ENCODE measurements at regions of chr17 and their contacts with region 1.

Region 1: DNA sequence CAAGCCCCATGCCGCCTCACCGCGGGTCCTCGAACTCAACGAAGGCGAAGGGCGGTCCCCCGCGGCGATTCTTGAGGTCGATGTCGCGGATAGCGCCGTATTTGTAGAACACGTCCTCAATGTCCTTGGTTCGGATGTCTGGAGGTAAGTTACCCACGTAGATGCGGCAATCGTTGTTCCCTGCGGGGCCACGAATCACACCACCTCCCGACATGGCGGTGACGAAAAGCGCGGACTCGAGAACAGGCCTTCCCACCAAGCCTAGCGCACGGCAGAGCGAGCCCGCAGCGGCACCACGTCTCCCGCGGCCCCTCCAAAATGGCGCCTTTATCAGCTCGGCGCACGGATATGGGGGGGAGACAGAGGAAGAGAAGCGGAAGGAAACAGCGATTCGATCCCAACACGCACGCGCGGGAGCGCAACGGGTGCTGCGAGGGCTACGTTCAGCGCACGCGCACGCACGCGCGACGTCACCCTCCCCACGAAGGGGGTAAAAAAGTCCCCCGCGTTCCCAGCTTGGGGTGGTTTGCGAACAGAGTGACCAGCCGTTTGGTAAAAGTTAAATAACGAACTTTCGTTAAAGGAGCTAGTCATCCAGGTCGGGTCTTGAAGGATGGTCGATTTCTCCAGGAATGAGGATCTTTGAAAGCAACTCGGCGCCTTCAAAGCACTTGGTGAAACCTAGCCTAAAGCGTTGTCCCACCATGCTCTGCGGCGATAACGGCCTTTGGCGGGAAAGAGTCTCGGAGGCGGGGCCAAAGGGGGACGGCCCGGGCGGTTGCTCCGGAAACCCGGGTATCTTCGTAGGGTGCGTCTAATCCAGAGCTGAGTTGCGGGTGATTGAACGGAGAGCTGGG is at the start of gene SRSF1:
- DNase-seq: peak; percentile 95 to 99 (median 97)
- ATAC-seq: peak; percentile 88
- H3K4me3 Mint-ChIP-seq: peak within 1 kb of the TSS; percentile 98 to 100 (median 99)
- H3K27ac Mint-ChIP-seq: peak within 1 kb of the TSS; percentile 98 to 100 (median 99)
- H3K4me1 Mint-ChIP-seq: peaks cover 20 to 58% (median 54%) of the 10 kb centered on the region in 4 donors
- H3K27me3 Mint-ChIP-seq: peaks cover 0 to 4% (median 0%) of the 10 kb centered on the region in 5 donors
- polyA plus RNA-seq, gene SRSF1: 43.5 to 51.6 (median 45.4) TPM

Region 2: DNA sequence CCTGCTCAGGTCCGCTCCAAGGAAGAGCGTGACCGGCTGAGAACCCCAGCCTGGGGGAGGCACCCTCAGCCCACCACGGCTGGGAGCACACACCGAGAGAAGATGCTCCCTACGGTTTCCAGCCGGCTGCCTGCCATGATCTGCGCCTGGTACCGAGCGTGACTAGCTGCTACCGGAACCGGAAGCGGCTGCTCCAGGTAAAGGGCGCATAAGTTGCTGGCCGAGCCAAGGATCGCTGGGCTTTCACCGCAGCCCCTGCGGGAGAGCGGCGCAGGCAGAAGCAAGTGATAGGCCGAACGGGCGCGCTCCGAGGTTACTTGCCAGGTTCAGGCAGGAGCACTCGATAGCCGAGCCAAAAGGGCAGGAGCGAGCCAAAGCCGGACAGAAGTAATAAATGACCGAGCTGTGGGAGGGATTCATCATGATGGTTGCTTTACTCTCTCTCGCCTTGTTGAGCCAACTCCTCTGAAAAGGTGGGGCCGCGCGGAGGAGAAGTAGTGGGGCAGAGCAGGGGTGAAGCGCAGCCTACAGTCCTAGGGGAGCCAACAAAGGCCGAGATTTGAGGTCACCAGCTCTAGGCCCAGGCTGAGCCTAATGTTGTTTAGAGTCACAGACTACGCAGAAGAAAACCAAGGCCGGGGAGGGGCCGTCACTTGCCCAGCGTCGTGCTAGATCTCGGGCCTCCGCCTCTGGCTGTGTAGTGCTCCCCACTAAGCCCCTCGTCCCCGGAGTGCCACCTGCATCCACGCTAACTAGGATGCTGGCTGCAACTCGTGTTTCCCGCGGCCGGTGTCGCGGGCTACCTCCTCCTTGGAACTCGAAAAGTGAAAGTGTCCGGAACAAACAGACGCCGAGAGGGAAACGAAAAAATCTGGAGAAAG is 157.0 kb before region 1 on chr17 and contains the start of gene MRPS23:
- POLR2A ChIA-PET with region 1: interaction called, 45 read pairs
- DNase-seq: peak; percentile 87 to 98 (median 95)
- ATAC-seq: peak; percentile 91 to 93
- H3K4me3 Mint-ChIP-seq: peak within 1 kb of the TSS; percentile 96 to 100 (median 98)
- H3K27ac Mint-ChIP-seq: peak within 1 kb of the TSS; percentile 99 to 100 (median 100)
- H3K4me1 Mint-ChIP-seq: peaks cover 21 to 55% (median 46%) of the 10 kb centered on the region in 4 donors
- H3K27me3 Mint-ChIP-seq: no peaks in the 10 kb centered on the region
- polyA plus RNA-seq, gene MRPS23: 41.1 to 42.8 (median 41.6) TPM

Region 3: GRCh38 chr17:57939797-57940196 is 67.4 kb before region 1 on chr17:
- POLR2A ChIA-PET with region 1: no interaction called
- DNase-seq: peak in 1 of 10 donors; percentile 42
- ATAC-seq: peak; percentile 62 to 70
- H3K4me3 Mint-ChIP-seq: peak overlapping the region in 1 of 10 donors; percentile 20
- H3K27ac Mint-ChIP-seq: no peak overlapping the region
- H3K4me1 Mint-ChIP-seq: peaks cover 4 to 30% (median 10%) of the 10 kb centered on the region in 4 donors
- H3K27me3 Mint-ChIP-seq: peaks cover 4 to 18% (median 17%) of the 10 kb centered on the region in 5 donors

Region 4: DNA sequence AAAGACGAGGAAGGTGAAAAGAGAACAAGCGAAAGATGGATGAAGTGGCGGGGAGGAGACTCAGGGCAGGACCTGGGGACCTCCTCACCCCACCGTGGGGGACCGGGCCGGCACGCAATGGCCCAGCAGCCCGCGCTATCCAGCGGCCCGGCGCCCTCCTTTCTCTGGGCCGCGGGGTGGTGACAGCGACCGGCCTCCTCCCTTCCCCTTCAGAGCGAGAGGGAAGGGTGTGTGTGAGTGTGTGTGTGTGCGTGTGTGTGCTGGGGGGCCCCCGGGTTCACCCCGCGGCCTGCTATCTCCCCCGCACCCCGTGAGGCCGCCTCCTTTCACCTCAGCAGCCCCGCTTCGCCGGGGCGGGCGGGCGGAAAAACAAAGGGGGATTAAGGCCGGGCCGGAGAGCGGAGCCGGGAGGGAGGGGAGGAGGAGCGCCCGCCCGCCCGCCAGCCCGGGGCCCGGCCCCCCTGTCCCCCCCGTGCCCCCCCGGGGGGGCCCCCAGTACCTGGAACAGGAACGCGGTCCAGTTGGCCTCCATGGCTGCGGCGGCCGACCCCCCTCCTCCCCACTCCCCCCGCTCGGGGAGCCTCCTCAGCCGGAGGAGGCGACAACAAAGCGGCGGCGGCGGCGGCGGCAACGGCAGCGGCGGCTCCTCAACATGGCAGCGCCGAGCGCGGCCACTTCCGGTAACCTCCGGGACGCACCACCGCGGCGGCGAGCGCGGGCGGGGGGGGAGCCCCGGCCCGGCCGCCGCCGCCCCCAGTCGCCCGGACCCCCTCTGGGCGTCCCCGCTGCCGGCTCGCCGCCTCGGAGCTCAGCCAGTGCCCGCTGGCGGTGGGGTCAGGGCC is 19.4 kb before region 1 on chr17 and contains the start of gene VEZF1:
- POLR2A ChIA-PET with region 1: interaction called, 44 read pairs
- DNase-seq: peak; percentile 63 to 87 (median 75)
- ATAC-seq: peak; percentile 75 to 79
- H3K4me3 Mint-ChIP-seq: peak within 1 kb of the TSS; percentile 88 to 96 (median 95)
- H3K27ac Mint-ChIP-seq: peak within 1 kb of the TSS; percentile 92 to 97 (median 95)
- H3K4me1 Mint-ChIP-seq: peaks cover 39 to 75% (median 70%) of the 10 kb centered on the region in 4 donors
- H3K27me3 Mint-ChIP-seq: peaks cover 0 to 2% (median 0%) of the 10 kb centered on the region in 5 donors
- polyA plus RNA-seq, gene VEZF1: 41.1 to 48.9 (median 42.1) TPM

Region 5: GRCh38 chr17:57995076-57995956 is 11.8 kb before region 1 on chr17:
- POLR2A ChIA-PET with region 1: interaction called, 44 read pairs
- DNase-seq: peak in 9 of 10 donors; percentile 9 to 69 (median 42)
- ATAC-seq: peak; percentile 69 to 84
- H3K4me3 Mint-ChIP-seq: peak overlapping the region in 2 of 10 donors; percentile 2 to 9
- H3K27ac Mint-ChIP-seq: peak overlapping the region; percentile 31 to 88 (median 70)
- H3K4me1 Mint-ChIP-seq: peaks cover 16 to 58% (median 53%) of the 10 kb centered on the region in 4 donors
- H3K27me3 Mint-ChIP-seq: no peaks in the 10 kb centered on the region

Region 6: GRCh38 chr17:58020401-58020800 is 13.2 kb after region 1 on chr17:
- POLR2A ChIA-PET with region 1: interaction called, 11 read pairs
- DNase-seq: no peak
- ATAC-seq: no peak
- H3K4me3 Mint-ChIP-seq: no peak overlapping the region
- H3K27ac Mint-ChIP-seq: no peak overlapping the region
- H3K4me1 Mint-ChIP-seq: no peaks in the 10 kb centered on the region
- H3K27me3 Mint-ChIP-seq: peaks cover 13 to 33% (median 27%) of the 10 kb centered on the region in 5 donors

Region 7: DNA sequence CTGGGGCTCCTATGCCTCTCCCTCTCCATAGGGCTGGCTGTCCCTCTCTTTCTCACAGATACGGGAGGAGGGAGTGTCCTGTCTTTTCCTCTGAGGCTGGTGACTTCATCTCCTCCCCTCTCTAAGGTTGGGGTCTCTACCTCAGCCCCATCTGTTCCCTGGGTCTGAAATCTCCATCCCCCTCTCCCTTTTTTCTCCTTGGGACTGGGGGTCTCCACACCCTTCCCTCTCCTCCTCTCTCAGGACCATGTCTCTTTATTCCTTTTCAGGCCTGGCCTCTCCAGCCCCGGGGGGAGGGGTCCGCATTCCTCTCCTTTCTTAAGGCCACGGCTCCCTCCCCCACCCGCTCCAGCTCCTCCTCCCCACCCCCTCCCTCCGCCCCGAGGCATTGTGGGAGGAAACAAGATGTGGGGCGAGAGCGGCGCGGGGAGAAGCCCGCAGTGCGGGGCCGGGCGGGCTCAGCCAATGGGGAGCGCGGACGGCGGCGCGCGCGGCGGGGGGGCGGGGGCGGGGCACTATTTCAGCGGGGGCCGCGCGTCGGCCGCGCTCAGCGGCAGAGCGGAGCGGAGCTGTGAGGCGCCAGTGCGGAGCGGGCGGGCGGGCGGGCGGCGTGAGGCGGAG is 75.8 kb after region 1 on chr17 and contains the start of gene DYNLL2:
- POLR2A ChIA-PET with region 1: interaction called, 23 read pairs
- DNase-seq: peak; percentile 78 to 94 (median 84)
- ATAC-seq: peak; percentile 78
- H3K4me3 Mint-ChIP-seq: peak within 1 kb of the TSS; percentile 80 to 97 (median 88)
- H3K27ac Mint-ChIP-seq: peak within 1 kb of the TSS; percentile 52 to 96 (median 90)
- H3K4me1 Mint-ChIP-seq: peaks cover 18 to 37% (median 34%) of the 10 kb centered on the region in 4 donors
- H3K27me3 Mint-ChIP-seq: no peaks in the 10 kb centered on the region
- polyA plus RNA-seq, gene DYNLL2: 1.1 to 1.3 (median 1.2) TPM

Region 8: GRCh38 chr17:58219001-58219788 is 212.0 kb after region 1 on chr17 and contains the start of gene MKS1:
- POLR2A ChIA-PET with region 1: interaction called, 11 read pairs
- DNase-seq: peak; percentile 91 to 97 (median 95)
- ATAC-seq: peak; percentile 95
- H3K4me3 Mint-ChIP-seq: peak within 1 kb of the TSS; percentile 84 to 94 (median 91)
- H3K27ac Mint-ChIP-seq: peak within 1 kb of the TSS; percentile 94 to 98 (median 97)
- H3K4me1 Mint-ChIP-seq: peaks cover 9 to 32% (median 24%) of the 10 kb centered on the region in 4 donors
- H3K27me3 Mint-ChIP-seq: peaks cover 0 to 6% (median 2%) of the 10 kb centered on the region in 5 donors
- polyA plus RNA-seq, gene MKS1: 10.5 to 14.2 (median 13.0) TPM